Activated naive CD4-positive, alpha-beta T cell treated with anti-CD3 and anti-CD28 coated beads, Interleukin-2, amount 10 ng/mL, durations not matched to agents 7 days and 5 days (primary cell): ENCODE measurements at regions of chr4 and their contacts with region 1.

Region 1: GRCh38 chr4:15882675-15883086 is 55.9 kb downstream of the FGFBP1 start:
- DNase-seq: peak; percentile 62
- H3K4me3 Mint-ChIP-seq: no peak overlapping the region
- H3K27ac Mint-ChIP-seq: no peak overlapping the region
- H3K4me1 Mint-ChIP-seq: no peaks in the 10 kb centered on the region
- H3K27me3 Mint-ChIP-seq: peaks cover 19% of the 10 kb centered on the region

Region 2: DNA sequence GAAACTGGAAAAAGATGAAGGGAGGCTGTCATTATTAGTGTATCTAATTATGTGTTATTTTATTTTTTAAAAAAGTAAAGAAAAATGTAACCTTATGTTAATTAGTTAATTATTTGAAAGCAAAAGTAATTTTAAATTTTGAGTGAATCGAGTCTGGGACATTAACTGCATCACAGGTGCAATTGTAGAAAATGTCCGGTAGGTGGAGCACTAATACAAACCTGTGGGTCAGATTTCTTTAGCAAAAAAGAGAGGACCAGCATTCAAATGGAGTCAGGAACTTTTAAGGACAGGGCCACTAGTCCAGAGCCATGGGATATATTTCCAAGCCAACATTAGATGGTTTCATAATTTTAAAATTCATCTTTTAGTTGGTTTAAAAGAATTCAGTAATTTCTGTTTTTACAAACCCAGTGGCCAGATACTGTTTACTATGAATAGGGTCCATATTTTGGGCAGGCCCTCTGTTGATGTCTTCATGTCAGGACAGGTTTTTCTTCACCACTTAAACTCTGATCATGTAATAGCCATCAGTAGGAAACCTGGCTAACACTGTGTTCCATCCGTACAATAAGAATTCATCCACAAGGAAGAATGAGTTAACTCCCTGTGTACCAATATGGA is 152.7 kb before region 1 on chr4:
- CTCF ChIA-PET with region 1: interaction called, 10 read pairs
- DNase-seq: peak; percentile 46
- H3K4me3 Mint-ChIP-seq: no peak overlapping the region
- H3K27ac Mint-ChIP-seq: no peak overlapping the region
- H3K4me1 Mint-ChIP-seq: peaks cover 30% of the 10 kb centered on the region
- H3K27me3 Mint-ChIP-seq: peaks cover under 1% of the 10 kb centered on the region

Region 3: DNA sequence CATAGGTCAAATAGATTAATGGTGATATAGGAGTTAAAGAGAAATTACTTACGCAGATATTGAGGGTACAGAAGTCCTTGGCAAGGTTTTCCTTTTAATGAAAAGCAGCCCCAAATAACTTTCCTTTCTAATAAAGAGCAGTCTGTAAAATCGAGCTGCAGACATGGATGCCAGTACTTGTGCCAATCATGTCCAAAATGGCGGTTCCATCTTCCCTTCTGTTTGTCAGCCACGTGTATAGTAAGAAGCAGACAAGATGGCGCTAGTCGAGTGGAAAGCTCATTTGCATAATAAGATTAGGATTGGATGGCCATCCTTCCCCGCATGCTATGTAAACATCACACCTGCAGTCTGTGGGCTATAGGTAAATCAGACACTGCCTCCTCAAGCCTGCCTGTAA is 12.6 kb before region 1 on chr4:
- CTCF ChIA-PET with region 1: interaction called, 12 read pairs
- DNase-seq: no peak
- H3K4me3 Mint-ChIP-seq: no peak overlapping the region
- H3K27ac Mint-ChIP-seq: no peak overlapping the region
- H3K4me1 Mint-ChIP-seq: no peaks in the 10 kb centered on the region
- H3K27me3 Mint-ChIP-seq: peaks cover 15% of the 10 kb centered on the region

Region 4: DNA sequence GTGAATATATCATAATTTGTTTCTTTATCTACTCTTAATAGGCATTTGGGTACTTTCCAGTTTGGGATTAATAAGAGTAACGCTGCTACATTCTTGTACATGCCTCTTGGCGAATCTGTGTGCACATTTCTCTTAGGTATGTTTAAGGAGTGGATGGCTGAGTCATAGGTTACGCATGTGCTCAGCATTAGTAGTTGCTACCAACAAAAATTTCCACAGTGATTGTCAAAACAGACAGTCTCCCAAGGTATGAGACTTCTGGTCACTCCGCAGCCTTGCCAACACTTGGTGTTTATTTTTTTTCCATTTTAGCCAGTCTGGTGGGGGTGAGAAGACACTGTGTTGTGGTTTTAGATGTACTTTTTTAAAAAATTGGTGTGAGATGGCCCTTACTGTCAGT is 11.3 kb after region 1 on chr4:
- CTCF ChIA-PET with region 1: interaction called, 20 read pairs
- DNase-seq: no peak
- H3K4me3 Mint-ChIP-seq: no peak overlapping the region
- H3K27ac Mint-ChIP-seq: no peak overlapping the region
- H3K4me1 Mint-ChIP-seq: no peaks in the 10 kb centered on the region
- H3K27me3 Mint-ChIP-seq: peaks cover 41% of the 10 kb centered on the region

Region 5: DNA sequence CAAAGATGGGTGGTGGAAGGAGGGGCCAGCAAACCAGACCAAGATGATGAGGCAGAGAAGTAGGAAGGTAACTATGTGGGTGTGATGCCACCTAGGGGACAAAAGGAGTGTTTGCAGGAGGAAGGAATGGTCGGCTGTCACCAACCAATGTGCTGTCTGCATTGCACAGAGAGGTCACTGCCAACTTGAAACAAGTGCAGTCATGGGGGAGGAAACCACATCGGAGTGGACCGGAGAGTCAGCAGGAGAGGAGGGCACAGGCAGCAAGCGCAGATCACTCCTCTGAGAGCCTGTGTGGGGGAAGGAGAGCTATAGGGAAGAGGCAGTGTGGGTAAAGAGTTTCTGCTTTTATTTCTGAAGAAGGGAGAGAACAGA is 118.8 kb after region 1 on chr4:
- CTCF ChIA-PET with region 1: interaction called, 36 read pairs
- DNase-seq: peak; percentile 58
- H3K4me3 Mint-ChIP-seq: no peak overlapping the region
- H3K27ac Mint-ChIP-seq: no peak overlapping the region
- H3K4me1 Mint-ChIP-seq: no peaks in the 10 kb centered on the region
- H3K27me3 Mint-ChIP-seq: peaks cover 18% of the 10 kb centered on the region